ENCODE measurements at regions of chr12 and their contacts with region 1.

Region 1: DNA sequence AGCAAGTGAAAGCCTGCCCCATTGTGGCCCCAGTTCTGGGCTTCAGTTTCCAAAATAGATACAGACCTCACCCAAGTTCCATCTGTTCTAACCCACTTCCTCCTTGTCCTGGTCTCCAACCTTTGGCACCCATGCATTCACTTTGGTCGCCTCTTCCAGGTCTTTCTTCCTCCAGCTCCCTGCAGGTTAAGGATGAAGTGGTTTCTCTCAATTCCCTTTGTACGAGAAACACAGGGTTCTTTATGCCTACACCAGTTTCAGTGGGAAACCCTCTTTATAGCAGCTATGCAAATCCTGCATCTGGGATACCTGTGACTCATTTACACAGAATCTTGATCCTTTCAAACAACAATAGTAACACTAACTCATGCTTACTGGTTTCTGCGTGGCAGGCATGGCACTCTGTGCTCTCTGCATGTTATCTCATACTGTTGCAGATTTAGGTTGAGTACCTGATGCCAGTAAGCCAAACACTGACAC is 110.6 kb upstream of the AMIGO2 start:
- DNase-seq: no peak
- H3K4me3 Mint-ChIP-seq: peak overlapping the region; percentile 66
- H3K27ac Mint-ChIP-seq: peak overlapping the region; percentile 81
- H3K4me1 Mint-ChIP-seq: peaks cover 63% of the 10 kb centered on the region
- H3K27me3 Mint-ChIP-seq: no peaks in the 10 kb centered on the region

Region 2: DNA sequence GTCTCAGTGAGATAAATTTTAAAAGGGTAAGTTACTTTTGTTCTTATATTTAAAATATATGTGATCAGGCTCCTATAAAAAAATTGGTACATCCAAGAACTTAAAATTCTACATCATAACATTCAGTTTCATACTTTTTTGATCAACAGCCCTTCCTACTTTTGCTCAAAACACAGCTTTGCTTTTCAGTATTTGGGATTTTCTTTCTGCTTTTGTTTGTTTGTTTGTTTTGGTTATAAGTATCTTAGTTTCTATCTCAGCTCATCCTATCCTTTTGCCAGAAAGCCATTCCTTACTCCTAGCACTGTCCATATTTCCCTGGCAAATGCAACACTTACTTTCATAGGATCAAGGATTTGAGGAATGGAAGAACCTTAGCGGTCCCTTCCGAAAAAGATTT is 115.6 kb before region 1 on chr12:
- intact Hi-C with region 1: no loop called
- DNase-seq: no peak
- H3K4me3 Mint-ChIP-seq: no peak overlapping the region
- H3K27ac Mint-ChIP-seq: no peak overlapping the region
- H3K4me1 Mint-ChIP-seq: peaks cover 26% of the 10 kb centered on the region
- H3K27me3 Mint-ChIP-seq: no peaks in the 10 kb centered on the region

Region 3: GRCh38 chr12:47207340-47207717 is 17.0 kb after region 1 on chr12:
- intact Hi-C with region 1: loop called (anchors 1 kb)
- DNase-seq: peak; percentile 80
- H3K4me3 Mint-ChIP-seq: peak overlapping the region; percentile 79
- H3K27ac Mint-ChIP-seq: peak overlapping the region; percentile 18
- H3K4me1 Mint-ChIP-seq: peaks cover 63% of the 10 kb centered on the region
- H3K27me3 Mint-ChIP-seq: no peaks in the 10 kb centered on the region